Endothelial cell of umbilical vein (primary cell): ENCODE measurements at regions of chr19 and their contacts with region 1.

Region 1: GRCh38 chr19:21328885-21329605 is at the start of gene ZNF708:
- DNase-seq: peak; percentile 90
- H3K4me3 ChIP-seq: peak within 1 kb of the TSS; percentile 58 to 95 (median 93)
- H3K27ac ChIP-seq: peak within 1 kb of the TSS; percentile 96
- H3K4me1 ChIP-seq: peaks cover 6% of the 10 kb centered on the region
- H3K27me3 ChIP-seq: no peaks in the 10 kb centered on the region
- CTCF ChIP-seq: no peak
- POLR2A ChIP-seq: peak; percentile 89
- total RNA-seq, gene ZNF708: 8.1 and 10.4 TPM in 2 replicates

Region 2: GRCh38 chr19:21358768-21359451 is 29.9 kb after region 1 on chr19 and contains the start of gene ZNF738:
- CTCF ChIA-PET with region 1: no interaction called
- POLR2A ChIA-PET with region 1: no interaction called
- dilution Hi-C with region 1: no loop called
- intact Hi-C with region 1: loop called (anchors 1 kb)
- DNase-seq: peak; percentile 96
- H3K4me3 ChIP-seq: peak within 1 kb of the TSS; percentile 77 to 93 (median 92)
- H3K27ac ChIP-seq: peak within 1 kb of the TSS; percentile 90
- H3K4me1 ChIP-seq: no peaks in the 10 kb centered on the region
- H3K27me3 ChIP-seq: no peaks in the 10 kb centered on the region
- CTCF ChIP-seq: no peak
- POLR2A ChIP-seq: peak; percentile 48
- total RNA-seq, gene ZNF738: 10.1 and 10.8 TPM in 2 replicates

Region 3: DNA sequence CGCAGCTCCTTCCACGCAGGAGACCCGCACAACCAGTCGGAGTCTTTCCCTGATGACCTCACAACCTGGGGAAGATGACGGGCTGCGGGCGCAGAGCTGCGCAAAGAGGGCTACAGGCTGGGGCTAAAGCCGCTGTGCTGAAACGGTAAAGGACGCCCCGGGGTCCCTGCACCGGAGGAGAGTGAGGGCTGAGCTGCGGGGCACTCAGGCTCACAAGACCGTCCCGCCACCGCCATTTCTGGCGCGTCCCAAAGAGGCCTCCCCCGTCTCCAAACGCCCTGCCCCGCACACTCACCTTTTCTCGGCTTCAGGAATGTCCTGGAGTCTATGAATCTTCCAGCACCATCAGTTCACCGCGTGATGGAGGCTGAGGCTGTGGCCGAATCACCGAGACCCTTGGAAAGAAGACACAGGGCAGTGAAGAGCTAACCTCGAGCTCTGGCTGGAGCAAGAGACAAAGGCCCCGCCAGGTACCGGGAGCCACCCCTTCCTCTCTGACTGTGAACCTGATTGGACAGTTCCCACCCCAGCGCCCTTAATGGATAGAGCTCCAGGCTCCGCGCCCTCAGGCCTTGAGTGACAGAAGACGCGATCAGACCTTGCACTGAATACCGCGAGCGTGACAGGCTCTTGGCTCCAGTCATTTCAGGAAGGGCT is 134.5 kb after region 1 on chr19:
- CTCF ChIA-PET with region 1: no interaction called
- POLR2A ChIA-PET with region 1: no interaction called
- dilution Hi-C with region 1: no loop called
- intact Hi-C with region 1: no loop called
- DNase-seq: no peak
- H3K4me3 ChIP-seq: no peak overlapping the region
- H3K27ac ChIP-seq: no peak overlapping the region
- H3K4me1 ChIP-seq: no peaks in the 10 kb centered on the region
- H3K27me3 ChIP-seq: no peaks in the 10 kb centered on the region
- CTCF ChIP-seq: no peak
- POLR2A ChIP-seq: no peak

Region 4: GRCh38 chr19:21505459-21506451 is 176.7 kb after region 1 on chr19 and contains the start of gene ZNF429:
- CTCF ChIA-PET with region 1: no interaction called
- POLR2A ChIA-PET with region 1: no interaction called
- dilution Hi-C with region 1: no loop called
- intact Hi-C with region 1: loop called (anchors 1 kb)
- DNase-seq: peak; percentile 67
- H3K4me3 ChIP-seq: peak within 1 kb of the TSS in 2 of 3 experiments; percentile 37 to 52
- H3K27ac ChIP-seq: no peak within 1 kb of the TSS
- H3K4me1 ChIP-seq: no peaks in the 10 kb centered on the region
- H3K27me3 ChIP-seq: no peaks in the 10 kb centered on the region
- CTCF ChIP-seq: no peak
- POLR2A ChIP-seq: no peak
- total RNA-seq, gene ZNF429: 2.4 and 2.6 TPM in 2 replicates